ENCODE measurements at regions of chr22 and their contacts with region 1.

Region 1: DNA sequence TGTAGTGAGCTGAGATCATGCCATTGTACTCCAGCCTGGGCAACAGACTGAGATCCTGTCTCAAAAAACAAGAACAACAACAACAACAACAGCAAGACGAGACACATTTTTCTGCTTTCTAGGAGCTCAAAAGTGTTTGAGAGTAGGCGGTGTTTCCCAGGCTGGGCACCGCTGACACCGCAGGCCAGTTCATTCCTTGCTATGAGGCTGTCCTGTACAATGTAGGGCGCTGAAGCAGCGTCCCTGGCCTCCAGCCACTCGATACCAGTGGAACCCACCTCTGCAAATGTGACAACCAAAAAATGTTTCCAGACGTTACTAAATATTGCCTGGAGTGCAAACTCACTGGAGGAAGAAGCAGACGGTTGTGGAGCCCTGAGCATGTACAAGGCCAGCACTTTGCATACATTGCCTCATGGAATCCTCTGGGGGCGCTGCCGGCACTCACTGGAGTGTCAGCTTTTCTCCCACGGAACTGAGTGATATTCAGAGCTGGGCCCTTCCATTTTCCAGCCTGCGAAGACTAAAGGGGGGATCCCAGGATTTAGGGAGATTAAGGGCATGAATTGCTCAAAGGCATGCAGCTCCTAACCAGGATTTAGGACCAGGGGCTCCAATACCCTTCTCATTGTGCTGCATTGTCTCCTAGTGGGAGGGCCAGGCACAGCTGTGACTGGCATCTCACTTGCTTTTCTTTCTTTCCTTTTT is 5.8 kb upstream of the MIEF1 start:
- DNase-seq: no peak
- H3K4me3 ChIP-seq: no peak overlapping the region
- H3K27me3 ChIP-seq: peaks cover 1% of the 10 kb centered on the region; the same call in 1 of the 2 replicates
- CTCF ChIP-seq: peak; percentile 86

Region 2: DNA sequence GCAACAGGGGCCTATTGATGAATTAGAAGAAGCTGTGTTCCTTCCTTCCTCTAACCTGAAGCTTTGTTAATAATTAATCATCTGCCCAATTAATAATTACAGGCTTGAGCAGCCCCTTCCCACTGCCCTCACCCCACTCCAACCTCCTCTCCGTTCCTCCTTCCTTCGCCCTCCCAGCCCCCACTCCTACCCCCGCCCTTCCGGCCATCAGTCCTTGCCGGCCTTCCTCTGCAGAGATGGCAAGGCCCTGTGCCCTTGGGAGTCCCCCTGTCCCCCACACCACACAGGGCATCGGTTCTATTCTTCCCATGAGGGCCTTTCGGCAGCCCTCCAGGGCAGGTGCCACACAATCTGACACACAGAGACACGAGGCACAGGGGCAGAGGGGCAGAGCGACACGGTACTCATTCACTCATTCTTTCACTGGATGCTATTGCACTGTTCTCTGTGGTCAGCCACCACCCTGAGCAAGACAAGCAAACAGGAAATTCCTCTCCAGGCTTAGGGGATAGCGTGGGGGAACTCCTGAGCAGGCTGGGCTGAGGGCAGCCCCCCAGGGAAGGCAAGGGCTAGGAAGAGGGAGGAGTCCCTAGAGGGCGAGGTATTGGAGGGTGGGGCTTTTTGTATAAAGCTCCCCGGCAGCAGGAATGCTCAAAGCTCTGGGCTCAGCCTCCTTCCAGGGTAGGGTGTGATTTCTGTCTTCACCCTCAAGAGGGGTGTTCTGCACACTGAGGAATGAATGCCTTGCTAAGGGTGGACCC is 24.7 kb before region 1 on chr22:
- CTCF ChIA-PET with region 1: interaction called, 20 read pairs
- POLR2A ChIA-PET with region 1: no interaction called
- DNase-seq: peak; percentile 30
- H3K4me3 ChIP-seq: no peak overlapping the region
- H3K27me3 ChIP-seq: no peaks in the 10 kb centered on the region
- CTCF ChIP-seq: no peak

Region 3: GRCh38 chr22:39526736-39527171 is 30.5 kb after region 1 on chr22:
- CTCF ChIA-PET with region 1: interaction called, 35 read pairs
- POLR2A ChIA-PET with region 1: interaction called, 5 read pairs
- DNase-seq: no peak
- H3K4me3 ChIP-seq: no peak overlapping the region
- H3K27me3 ChIP-seq: no peaks in the 10 kb centered on the region
- CTCF ChIP-seq: no peak

Measured in BJ (cell line).